Naive thymus-derived CD8-positive, alpha-beta T cell (primary cell): ENCODE measurements at regions of chr17 and their contacts with region 1.

Region 1: DNA sequence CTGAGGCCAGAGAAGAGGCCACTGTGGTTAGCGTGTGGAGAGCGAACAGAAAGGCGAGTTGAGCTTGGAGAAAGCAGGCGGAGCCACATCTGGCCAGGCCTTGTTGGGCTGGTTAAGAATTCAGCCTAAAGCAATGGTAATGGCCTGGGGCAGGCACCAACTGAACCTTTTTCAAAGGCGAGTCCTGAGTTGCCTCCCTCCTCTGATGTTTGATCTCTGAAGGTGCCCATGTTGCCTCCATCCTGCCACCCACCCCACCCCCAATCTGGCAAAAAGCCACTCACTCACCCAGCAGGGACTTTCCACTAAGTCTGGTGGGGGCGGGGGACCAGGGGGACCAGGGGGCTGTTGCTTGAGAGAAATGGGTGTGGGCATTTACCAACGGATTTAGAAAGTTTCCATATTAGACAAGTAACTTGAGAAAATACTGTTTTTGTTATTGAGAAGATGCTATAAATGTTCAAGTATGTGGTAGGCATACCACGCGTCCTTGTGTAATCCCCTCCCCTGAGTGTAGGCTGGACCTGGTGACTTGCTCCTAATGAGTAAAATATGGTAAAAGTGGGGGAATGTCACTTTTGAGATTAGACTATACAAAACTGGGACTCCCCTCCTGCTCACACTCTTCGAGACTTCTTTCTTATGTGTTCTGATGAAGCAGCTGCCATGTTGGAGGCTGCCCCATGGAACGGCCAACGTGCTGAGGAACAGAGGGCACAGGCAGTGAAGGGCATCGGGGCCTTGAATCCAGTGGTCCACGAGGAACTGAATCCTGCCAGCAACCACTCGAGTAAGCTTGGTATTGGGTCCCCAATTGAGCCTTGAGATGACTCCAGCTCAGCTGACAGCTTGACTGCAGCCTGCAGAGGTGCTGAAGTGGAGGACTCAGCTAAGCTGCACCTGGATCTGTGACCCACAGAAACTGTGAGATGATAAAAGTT is 29.9 kb upstream of the TNS4 start:
- DNase-seq: peak; percentile 48 to 88 (median 61)
- ATAC-seq: peak; percentile 8 to 20
- H3K4me3 Mint-ChIP-seq: peak overlapping the region in 9 of 10 donors; percentile 29 to 65 (median 39)
- H3K27ac Mint-ChIP-seq: peak overlapping the region in 9 of 10 donors; percentile 18 to 96 (median 77)
- H3K4me1 Mint-ChIP-seq: peaks cover 34 to 78% (median 70%) of the 10 kb centered on the region in 4 donors
- H3K27me3 Mint-ChIP-seq: peaks cover 0 to 3% (median 0%) of the 10 kb centered on the region in 5 donors

Region 2: DNA sequence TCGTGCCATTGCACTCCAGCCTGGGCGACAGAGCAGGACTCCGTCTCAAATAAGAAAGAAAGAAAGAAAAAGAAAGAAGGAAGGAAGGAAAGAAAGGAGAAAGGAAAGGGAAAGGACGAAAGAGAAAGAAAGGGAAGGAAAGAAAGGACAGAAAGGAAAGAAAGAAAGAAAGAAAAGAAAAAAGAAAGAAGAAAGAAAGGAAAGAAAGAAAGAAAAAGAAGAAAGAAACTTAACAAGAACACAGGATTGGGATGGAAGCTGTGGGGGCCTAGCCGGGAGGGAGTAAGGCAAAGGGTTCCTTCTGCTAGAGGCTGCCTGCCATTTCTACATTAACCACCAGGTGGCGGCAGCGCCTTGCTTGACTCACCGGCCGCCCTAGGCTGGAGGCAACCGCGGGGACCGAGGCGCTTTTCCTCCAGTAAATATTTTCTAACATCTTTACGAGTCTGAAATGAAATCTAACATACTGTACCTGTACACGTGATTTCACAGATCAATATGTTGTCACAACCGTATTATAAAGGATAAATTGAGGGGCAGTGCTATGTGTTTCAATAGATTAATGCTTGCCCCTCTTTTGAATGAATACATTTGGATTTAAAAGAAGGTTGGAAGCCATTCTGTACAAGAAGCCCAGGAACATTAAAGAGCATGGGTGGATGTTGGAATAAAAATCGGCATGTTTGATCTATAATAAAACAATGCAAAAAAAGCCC is 172.8 kb before region 1 on chr17:
- POLR2A ChIA-PET with region 1: interaction called, 13 read pairs
- DNase-seq: peak; percentile 77 to 91 (median 86)
- ATAC-seq: peak; percentile 49 to 57
- H3K4me3 Mint-ChIP-seq: peak overlapping the region in 3 of 10 donors; percentile 44 to 48 (median 45)
- H3K27ac Mint-ChIP-seq: peak overlapping the region in 5 of 10 donors; percentile 15 to 47 (median 33)
- H3K4me1 Mint-ChIP-seq: peaks cover 12 to 31% (median 21%) of the 10 kb centered on the region in 4 donors
- H3K27me3 Mint-ChIP-seq: peaks cover 3 to 29% (median 10%) of the 10 kb centered on the region in 5 donors

Region 3: DNA sequence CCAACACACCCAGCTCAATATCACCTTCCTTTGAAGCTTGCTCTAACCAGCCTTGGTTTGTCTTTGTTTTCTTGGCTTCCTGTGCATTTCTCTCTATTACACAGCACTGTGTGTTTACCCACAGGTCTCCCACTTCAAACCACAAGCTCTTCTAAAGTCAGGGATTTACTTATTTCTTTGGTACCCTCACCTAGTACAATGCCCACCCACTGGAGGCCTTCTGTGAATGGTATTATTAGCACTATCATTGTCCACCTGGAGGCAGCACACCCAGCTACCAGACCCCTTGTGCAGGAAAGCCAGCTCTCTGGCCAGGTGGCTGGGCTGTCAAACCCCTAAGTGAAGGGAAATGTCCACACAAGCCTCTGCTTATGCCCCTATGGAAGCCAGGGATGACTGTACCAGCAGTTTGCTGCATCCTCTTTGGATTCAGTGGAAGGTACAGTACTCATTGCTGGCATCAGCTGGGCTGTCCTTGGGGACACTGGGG is 104.3 kb before region 1 on chr17:
- POLR2A ChIA-PET with region 1: interaction called, 10 read pairs
- DNase-seq: peak in 3 of 10 donors; percentile 47 to 64 (median 63)
- ATAC-seq: peak; percentile 97
- H3K4me3 Mint-ChIP-seq: peak overlapping the region in 9 of 10 donors; percentile 16 to 76 (median 44)
- H3K27ac Mint-ChIP-seq: peak overlapping the region in 7 of 10 donors; percentile 1 to 63 (median 37)
- H3K4me1 Mint-ChIP-seq: peaks cover 24 to 38% (median 29%) of the 10 kb centered on the region in 4 donors
- H3K27me3 Mint-ChIP-seq: no peaks in the 10 kb centered on the region

Region 4: GRCh38 chr17:40516581-40517285 is 14.6 kb before region 1 on chr17:
- POLR2A ChIA-PET with region 1: interaction called, 20 read pairs
- DNase-seq: peak in 9 of 10 donors; percentile 47 to 89 (median 78)
- ATAC-seq: peak; percentile 85 to 87
- H3K4me3 Mint-ChIP-seq: peak overlapping the region; percentile 58 to 85 (median 76)
- H3K27ac Mint-ChIP-seq: peak overlapping the region; percentile 32 to 95 (median 90)
- H3K4me1 Mint-ChIP-seq: peaks cover 43 to 65% (median 58%) of the 10 kb centered on the region in 4 donors
- H3K27me3 Mint-ChIP-seq: peaks cover 0 to 15% (median 8%) of the 10 kb centered on the region in 5 donors

Region 5: DNA sequence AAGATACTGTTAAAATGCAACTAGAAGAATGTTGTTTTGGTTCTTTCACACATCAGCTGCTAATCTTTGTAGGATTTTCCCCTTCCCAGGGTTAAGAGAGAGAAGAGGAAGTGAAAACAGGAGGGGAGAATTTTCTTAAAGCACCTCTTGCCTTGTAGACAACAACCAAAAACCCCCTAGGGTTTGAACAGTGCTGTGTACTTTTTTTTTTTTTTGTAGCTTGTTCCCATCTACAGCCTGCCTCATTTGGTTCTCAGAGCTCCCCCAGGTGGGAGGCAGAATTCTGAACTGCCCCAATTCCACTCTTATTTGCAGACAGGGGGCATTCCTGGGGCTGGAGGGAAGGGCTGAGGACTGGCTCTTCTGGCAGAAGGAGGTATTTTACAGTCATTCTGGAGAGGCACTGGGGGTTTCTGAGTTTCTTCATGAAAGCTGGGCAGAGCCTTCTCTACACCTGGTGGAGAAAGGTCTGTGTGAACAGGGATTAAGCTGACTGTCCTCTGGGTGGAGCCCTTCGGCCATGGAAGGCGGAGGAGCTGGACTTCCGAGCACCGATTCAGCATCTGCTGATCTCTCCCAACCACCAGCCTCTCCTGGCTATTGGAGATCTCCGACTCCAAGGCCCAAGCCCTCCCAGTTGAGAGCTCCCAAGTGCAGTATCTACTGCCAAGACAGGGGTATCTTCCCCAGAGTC is 84.1 kb after region 1 on chr17:
- POLR2A ChIA-PET with region 1: interaction called, 2,269 read pairs
- DNase-seq: peak in 9 of 10 donors; percentile 48 to 81 (median 67)
- ATAC-seq: peak; percentile 59
- H3K4me3 Mint-ChIP-seq: peak overlapping the region; percentile 67 to 90 (median 85)
- H3K27ac Mint-ChIP-seq: peak overlapping the region; percentile 93 to 100 (median 98)
- H3K4me1 Mint-ChIP-seq: peaks cover 35 to 81% (median 81%) of the 10 kb centered on the region in 4 donors
- H3K27me3 Mint-ChIP-seq: no peaks in the 10 kb centered on the region